A549 (cell line): ENCODE measurements at regions of chrX and their contacts with region 1.

Region 1: DNA sequence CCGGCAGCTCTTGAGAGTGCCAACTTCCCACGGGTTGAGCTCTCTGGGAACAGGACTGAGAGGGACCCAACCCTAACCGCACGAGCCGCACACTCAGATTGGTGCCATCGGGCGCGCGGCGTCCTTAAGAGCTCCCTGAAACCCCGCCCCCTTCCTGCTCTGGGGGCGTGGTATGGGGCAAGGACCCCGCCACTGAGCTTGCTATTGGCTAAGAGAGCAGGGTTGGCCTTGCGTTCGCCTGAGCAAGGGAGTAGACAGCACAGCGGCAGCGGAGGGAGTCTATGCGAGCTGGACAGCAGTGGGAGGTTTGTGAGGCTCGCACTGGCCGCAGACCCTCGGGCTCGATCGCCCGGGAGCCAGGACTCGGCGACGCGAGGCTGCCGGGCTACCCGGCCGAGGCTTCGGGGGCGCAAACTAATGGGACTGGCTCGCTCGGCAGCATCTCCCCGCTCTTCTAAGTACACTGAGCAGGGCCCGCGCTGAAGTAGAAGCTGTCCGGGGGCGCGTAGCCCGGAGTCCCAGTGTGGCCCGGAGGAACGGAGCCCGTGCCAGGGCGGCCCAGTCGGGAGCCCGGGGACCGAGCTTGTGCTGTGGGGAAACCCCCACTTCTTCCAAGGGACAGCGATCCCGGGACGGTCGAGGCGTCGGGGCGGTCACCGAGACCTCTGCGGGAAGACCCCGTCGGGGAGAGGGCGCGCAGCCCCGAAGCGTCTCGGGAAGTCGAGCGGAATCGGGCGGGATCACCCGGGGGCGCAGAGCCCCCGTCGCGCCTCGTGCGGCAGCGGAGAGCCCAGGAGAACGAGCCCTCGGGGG is at the start of gene EFNB1:
- DNase-seq: peak; percentile 80 to 95
- ATAC-seq: peak; percentile 85 to 93
- H3K4me3 ChIP-seq: peak within 1 kb of the TSS; percentile 86
- H3K27ac ChIP-seq: peak within 1 kb of the TSS; percentile 71 to 89
- H3K4me1 ChIP-seq: peaks cover 5% of the 10 kb centered on the region; the same call in 1 of the 3 replicates
- CTCF ChIP-seq: no peak
- EP300 ChIP-seq: no peak
- POLR2A ChIP-seq: peak; percentile 83
- RAD21 ChIP-seq: no peak; a peak in 1 of 5 replicates
- polyA plus RNA-seq, gene EFNB1: 3.7 TPM in 2 replicates

Region 2: GRCh38 chrX:68794461-68794860 is 34.5 kb before region 1 on chrX:
- CTCF ChIA-PET with region 1: no interaction called
- POLR2A ChIA-PET with region 1: no interaction called
- DNase-seq: no peak
- ATAC-seq: no peak
- H3K4me3 ChIP-seq: no peak overlapping the region
- H3K27ac ChIP-seq: no peak overlapping the region
- H3K4me1 ChIP-seq: no peaks in the 10 kb centered on the region
- CTCF ChIP-seq: no peak
- EP300 ChIP-seq: no peak
- POLR2A ChIP-seq: no peak
- RAD21 ChIP-seq: no peak

Region 3: DNA sequence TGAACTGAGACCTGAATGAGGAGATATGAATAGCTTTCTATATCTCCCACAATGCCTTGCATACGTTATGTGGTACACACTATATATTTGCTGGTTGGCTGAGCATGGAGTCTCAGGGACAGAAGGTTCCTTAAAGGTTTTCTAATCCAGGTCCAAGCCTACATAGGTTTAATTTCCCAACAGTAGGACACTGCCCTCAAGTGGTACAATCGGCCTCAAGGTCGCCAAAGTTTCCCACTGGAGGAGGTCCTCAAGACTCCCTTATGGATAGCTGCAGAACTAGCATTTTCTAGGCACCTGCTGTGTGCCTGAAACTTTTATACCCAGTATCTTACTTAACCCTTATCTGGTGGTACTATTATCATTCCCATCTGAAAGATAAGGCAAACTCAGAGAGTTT is 21.1 kb before region 1 on chrX:
- CTCF ChIA-PET with region 1: interaction called, 13 read pairs
- POLR2A ChIA-PET with region 1: no interaction called
- DNase-seq: peak; percentile 10 to 48
- ATAC-seq: peak; percentile 70 to 82; a peak in 4 of 6 replicates
- H3K4me3 ChIP-seq: no peak overlapping the region
- H3K27ac ChIP-seq: no peak overlapping the region
- H3K4me1 ChIP-seq: no peaks in the 10 kb centered on the region
- CTCF ChIP-seq: peak; percentile 39
- EP300 ChIP-seq: no peak
- POLR2A ChIP-seq: no peak
- RAD21 ChIP-seq: peak; percentile 38 to 49; a peak in 3 of 5 replicates

Region 4: GRCh38 chrX:69031221-69031620 is 202.3 kb after region 1 on chrX:
- CTCF ChIA-PET with region 1: interaction called, 10 read pairs
- POLR2A ChIA-PET with region 1: interaction called, 14 read pairs
- DNase-seq: no peak
- ATAC-seq: peak in 1 of 2 experiments; percentile 48; a peak in 1 of 6 replicates
- H3K4me3 ChIP-seq: no peak overlapping the region
- H3K27ac ChIP-seq: no peak overlapping the region
- H3K4me1 ChIP-seq: peaks cover 10% of the 10 kb centered on the region; the same call in 2 of the 3 replicates
- CTCF ChIP-seq: no peak
- EP300 ChIP-seq: no peak
- POLR2A ChIP-seq: no peak
- RAD21 ChIP-seq: peak in 1 of 2 experiments; percentile 27; a peak in 1 of 5 replicates

Region 5: GRCh38 chrX:69109683-69110082 is 280.7 kb after region 1 on chrX:
- CTCF ChIA-PET with region 1: interaction called, 4 read pairs
- POLR2A ChIA-PET with region 1: interaction called, 11 read pairs
- DNase-seq: peak; percentile 71 to 84
- ATAC-seq: peak; percentile 93 to 95
- H3K4me3 ChIP-seq: no peak overlapping the region
- H3K27ac ChIP-seq: peak overlapping the region; percentile 69 to 80; a peak in 5 of 6 replicates
- H3K4me1 ChIP-seq: peaks cover 27% of the 10 kb centered on the region
- CTCF ChIP-seq: no peak
- EP300 ChIP-seq: no peak
- POLR2A ChIP-seq: no peak
- RAD21 ChIP-seq: no peak

Region 6: GRCh38 chrX:69222103-69223090 is 393.5 kb after region 1 on chrX:
- CTCF ChIA-PET with region 1: interaction called, 327 read pairs
- POLR2A ChIA-PET with region 1: interaction called, 26 read pairs
- DNase-seq: peak; percentile 66 to 79
- ATAC-seq: peak; percentile 91 to 96
- H3K4me3 ChIP-seq: no peak overlapping the region
- H3K27ac ChIP-seq: no peak overlapping the region
- H3K4me1 ChIP-seq: no peaks in the 10 kb centered on the region
- CTCF ChIP-seq: peak; percentile 75
- EP300 ChIP-seq: no peak
- POLR2A ChIP-seq: no peak
- RAD21 ChIP-seq: peak; percentile 89 to 93

Region 7: DNA sequence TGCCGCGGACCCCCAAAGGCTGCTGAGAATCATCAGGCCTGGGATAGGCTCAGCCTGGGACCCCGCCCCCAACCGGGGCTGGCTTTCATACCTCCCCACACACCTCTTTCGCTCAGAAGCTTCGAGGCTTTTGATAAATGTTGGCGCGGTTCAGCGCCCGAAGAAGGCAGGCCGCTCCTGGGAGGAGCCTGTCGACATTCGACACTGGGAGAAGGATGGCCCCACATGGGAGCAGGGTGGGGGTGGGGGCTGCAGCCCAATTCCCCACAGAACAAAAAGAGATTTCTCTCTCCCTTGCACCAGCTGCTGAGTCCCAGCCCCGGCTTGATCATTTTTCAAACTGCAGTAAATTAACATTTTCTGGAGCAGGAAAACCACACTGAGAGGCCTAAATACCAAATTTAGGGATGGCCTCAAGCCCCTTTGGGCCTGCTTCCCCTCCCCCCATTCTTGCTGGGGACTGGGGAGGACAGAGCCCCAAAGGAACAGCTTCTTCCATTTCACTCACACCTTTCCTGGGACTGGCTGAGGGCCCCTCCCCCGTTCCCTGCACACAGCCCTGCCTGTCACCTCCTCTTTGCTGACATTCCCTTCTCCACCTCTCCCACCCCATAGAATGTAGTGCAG is 449.2 kb after region 1 on chrX:
- CTCF ChIA-PET with region 1: interaction called, 91 read pairs
- POLR2A ChIA-PET with region 1: no interaction called
- DNase-seq: no peak
- ATAC-seq: no peak
- H3K4me3 ChIP-seq: no peak overlapping the region
- H3K27ac ChIP-seq: no peak overlapping the region
- H3K4me1 ChIP-seq: no peaks in the 10 kb centered on the region
- CTCF ChIP-seq: no peak
- EP300 ChIP-seq: no peak
- POLR2A ChIP-seq: no peak
- RAD21 ChIP-seq: no peak

Region 8: DNA sequence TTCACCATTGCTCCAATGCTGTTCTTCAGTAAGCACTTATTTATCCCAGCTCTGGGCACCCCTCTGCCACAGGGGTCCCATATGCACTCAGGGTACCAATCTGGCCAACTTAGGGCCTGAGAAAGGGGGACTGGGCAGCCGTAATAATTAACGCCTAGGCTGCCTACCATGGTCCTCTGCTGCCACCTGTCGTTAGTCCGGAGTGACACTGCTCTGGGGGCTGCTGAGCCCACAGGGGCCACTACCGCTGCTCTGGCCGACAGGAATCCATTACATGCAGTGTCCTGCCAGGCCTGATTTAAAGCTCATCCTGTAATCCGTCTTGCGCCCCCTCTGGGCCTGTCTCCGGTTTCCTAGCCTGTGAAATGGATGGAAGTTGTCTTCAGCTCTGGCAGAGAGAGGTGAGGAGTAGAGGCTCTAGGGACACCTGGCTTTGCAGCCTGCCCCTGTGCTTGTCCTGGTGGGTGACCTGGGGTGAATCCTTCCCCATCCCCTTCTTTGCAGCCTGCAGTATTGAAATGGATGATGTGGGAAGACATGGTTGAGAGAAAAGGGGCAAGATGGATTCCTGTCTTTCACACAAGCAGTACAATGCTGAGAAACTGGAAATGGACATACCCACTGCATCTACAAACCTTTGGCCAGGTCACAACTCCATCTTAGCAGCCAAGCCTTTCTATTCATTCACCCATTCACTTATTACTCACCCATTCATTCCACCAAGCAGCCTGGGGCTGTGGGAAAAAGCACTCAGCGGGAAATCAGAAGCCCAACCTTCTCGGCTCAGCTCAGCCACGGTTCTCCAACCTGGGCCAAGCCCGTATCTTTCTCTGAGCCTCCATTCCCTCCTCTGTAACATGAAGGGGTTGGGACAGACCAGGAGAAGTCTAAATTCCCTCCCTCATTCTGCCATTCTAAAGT is 558.9 kb after region 1 on chrX:
- CTCF ChIA-PET with region 1: interaction called, 23 read pairs
- POLR2A ChIA-PET with region 1: no interaction called
- DNase-seq: peak; percentile 43 to 46
- ATAC-seq: peak; percentile 83 to 97
- H3K4me3 ChIP-seq: no peak overlapping the region
- H3K27ac ChIP-seq: no peak overlapping the region
- H3K4me1 ChIP-seq: no peaks in the 10 kb centered on the region
- CTCF ChIP-seq: peak; percentile 63
- EP300 ChIP-seq: no peak
- POLR2A ChIP-seq: no peak
- RAD21 ChIP-seq: peak; percentile 78 to 79